Activated CD8-positive, alpha-beta memory T cell treated with anti-CD3 and anti-CD28 coated beads, Interleukin-2, amount 10 ng/mL, durations not matched to agents 7 days and 5 days (primary cell): ENCODE measurements at regions of chrX and their contacts with region 1.

Region 1: DNA sequence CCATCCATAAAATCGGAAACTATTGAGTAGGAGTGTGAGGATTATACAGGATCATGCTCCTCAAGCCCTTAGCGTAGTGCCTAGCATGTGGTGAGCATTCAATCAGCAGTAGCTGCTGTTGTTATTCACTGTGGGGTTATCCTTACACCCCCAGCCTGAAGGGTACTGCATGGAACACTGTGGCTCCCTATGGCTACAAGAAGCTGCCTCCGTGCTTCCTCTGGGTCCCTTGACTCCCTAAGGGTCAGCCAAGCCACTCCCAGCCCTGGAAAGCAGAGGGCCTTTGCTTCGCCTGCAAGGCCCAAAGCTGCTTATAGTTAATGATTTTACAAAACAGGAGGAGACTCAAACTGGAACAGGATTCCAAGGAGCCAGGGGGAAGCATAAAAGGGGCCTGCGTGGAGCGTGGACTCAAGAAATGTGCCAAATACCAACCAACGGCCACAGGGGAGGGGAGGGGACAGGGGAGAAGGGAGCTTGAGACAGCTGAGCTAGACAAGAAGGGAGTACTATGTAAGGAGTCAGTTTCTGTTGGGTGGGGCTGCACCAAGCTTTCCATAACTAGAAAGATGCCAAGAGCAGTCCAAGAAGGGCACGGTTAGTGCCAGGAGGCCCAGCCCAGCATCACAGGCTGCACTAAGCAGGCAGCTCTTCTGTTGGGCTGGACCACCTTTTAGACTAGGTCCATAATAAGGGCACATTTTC is 15.9 kb downstream of the SEPTIN6 start:
- DNase-seq: no peak
- ATAC-seq: no peak
- H3K4me3 Mint-ChIP-seq: peak overlapping the region; percentile 75
- H3K27ac Mint-ChIP-seq: peak overlapping the region; percentile 98
- H3K4me1 Mint-ChIP-seq: peaks cover 55% of the 10 kb centered on the region
- H3K27me3 Mint-ChIP-seq: no peaks in the 10 kb centered on the region

Region 2: DNA sequence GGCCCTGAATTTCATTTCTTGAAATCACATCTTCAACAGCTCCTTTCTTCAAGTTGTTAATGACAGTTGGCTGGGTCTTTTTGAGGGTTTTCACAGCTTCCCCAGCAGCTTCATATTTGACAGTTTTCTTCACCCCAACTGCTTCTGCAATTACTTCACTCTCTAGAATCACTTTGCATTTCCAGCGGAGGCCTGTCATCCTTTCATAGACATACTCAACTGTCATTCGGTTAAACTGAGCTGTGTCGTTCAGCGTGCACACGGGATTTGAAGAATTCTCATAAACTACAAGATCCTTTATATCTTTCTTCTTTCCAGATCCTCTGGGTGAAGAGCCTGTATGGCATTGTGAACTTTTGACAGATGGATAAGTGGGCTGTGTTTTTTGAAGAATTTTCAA is 87.3 kb before region 1 on chrX:
- CTCF ChIA-PET with region 1: no interaction called
- DNase-seq: no peak
- ATAC-seq: no peak
- H3K4me3 Mint-ChIP-seq: no peak overlapping the region
- H3K27ac Mint-ChIP-seq: no peak overlapping the region
- H3K4me1 Mint-ChIP-seq: peaks cover 4% of the 10 kb centered on the region
- H3K27me3 Mint-ChIP-seq: no peaks in the 10 kb centered on the region

Region 3: GRCh38 chrX:119693040-119693995 is 16.2 kb after region 1 on chrX and contains the start of gene SEPTIN6:
- CTCF ChIA-PET with region 1: interaction called, 23 read pairs
- DNase-seq: peak; percentile 90
- ATAC-seq: peak; percentile 66
- H3K4me3 Mint-ChIP-seq: peak within 1 kb of the TSS; percentile 97
- H3K27ac Mint-ChIP-seq: peak within 1 kb of the TSS; percentile 99
- H3K4me1 Mint-ChIP-seq: peaks cover 19% of the 10 kb centered on the region
- H3K27me3 Mint-ChIP-seq: no peaks in the 10 kb centered on the region
- total RNA-seq, gene SEPTIN6: 236 to 263 TPM

Region 4: GRCh38 chrX:119880552-119881437 is 203.7 kb after region 1 on chrX:
- CTCF ChIA-PET with region 1: no interaction called
- DNase-seq: peak; percentile 52
- ATAC-seq: peak; percentile 87
- H3K4me3 Mint-ChIP-seq: no peak overlapping the region
- H3K27ac Mint-ChIP-seq: peak overlapping the region; percentile 66
- H3K4me1 Mint-ChIP-seq: peaks cover 20% of the 10 kb centered on the region
- H3K27me3 Mint-ChIP-seq: no peaks in the 10 kb centered on the region